A549 (cell line): ENCODE measurements at regions of chr15 and their contacts with region 1.

Region 1: GRCh38 chr15:73697033-73697467 is 12.9 kb downstream of the CD276 start:
- DNase-seq: no peak
- ATAC-seq: no peak
- H3K4me3 ChIP-seq: no peak overlapping the region
- H3K27ac ChIP-seq: no peak overlapping the region
- H3K4me1 ChIP-seq: no peaks in the 10 kb centered on the region
- CTCF ChIP-seq: no peak
- EP300 ChIP-seq: no peak
- POLR2A ChIP-seq: no peak
- RAD21 ChIP-seq: no peak

Region 2: GRCh38 chr15:73560501-73561117 is 136.4 kb before region 1 on chr15:
- CTCF ChIA-PET with region 1: interaction called, 38 read pairs
- POLR2A ChIA-PET with region 1: interaction called, 3 read pairs
- DNase-seq: peak; percentile 30 to 80
- ATAC-seq: peak; percentile 74 to 88; a peak in 5 of 6 replicates
- H3K4me3 ChIP-seq: no peak overlapping the region
- H3K27ac ChIP-seq: no peak overlapping the region
- H3K4me1 ChIP-seq: 0 out of 3 replicates have a peak, but pooled peaks cover 6% of the 10 kb centered on the region
- CTCF ChIP-seq: peak; percentile 87
- EP300 ChIP-seq: no peak
- POLR2A ChIP-seq: no peak
- RAD21 ChIP-seq: peak; percentile 83 to 88

Region 3: DNA sequence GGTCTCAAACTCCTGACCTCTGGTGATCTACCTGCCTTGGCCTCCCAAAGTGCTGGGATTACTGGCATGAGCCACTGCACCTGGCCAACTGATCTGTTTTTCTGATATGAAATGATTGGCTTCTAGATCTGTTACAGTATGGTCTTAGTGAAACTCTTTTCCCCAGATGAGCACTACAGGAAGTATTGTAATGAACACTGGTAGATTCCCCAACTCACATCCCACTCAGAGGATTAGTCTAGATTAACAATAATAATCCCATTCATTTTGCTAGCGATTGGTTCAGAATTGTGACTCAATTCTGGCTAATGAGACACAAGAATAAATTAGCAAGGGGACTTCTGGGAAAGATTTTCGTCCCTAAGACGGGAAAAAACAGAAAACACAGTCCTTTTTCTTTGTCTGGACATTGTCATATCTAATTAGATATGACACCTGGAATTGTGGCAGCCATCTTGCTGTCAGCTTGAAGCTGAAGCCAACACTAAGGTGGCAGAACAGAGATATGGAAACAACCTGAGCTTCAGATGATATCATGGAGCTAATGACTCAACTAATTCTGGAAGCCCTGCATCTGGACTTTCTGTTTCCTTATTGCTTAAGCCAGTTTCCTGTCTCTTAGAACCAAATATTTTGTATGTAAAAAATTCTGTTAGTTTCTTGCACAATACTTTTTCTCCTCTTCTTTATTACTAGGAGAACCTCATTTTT is 46.5 kb before region 1 on chr15:
- CTCF ChIA-PET with region 1: interaction called, 12 read pairs
- POLR2A ChIA-PET with region 1: interaction called, 8 read pairs
- DNase-seq: no peak
- ATAC-seq: 0 out of 6 replicates have a peak, but pooled peaks of 1 of the 2 experiments have one; percentile 24
- H3K4me3 ChIP-seq: no peak overlapping the region
- H3K27ac ChIP-seq: no peak overlapping the region
- H3K4me1 ChIP-seq: peaks cover 2% of the 10 kb centered on the region; the same call in 1 of the 3 replicates
- CTCF ChIP-seq: no peak
- EP300 ChIP-seq: no peak
- POLR2A ChIP-seq: no peak
- RAD21 ChIP-seq: no peak

Region 4: DNA sequence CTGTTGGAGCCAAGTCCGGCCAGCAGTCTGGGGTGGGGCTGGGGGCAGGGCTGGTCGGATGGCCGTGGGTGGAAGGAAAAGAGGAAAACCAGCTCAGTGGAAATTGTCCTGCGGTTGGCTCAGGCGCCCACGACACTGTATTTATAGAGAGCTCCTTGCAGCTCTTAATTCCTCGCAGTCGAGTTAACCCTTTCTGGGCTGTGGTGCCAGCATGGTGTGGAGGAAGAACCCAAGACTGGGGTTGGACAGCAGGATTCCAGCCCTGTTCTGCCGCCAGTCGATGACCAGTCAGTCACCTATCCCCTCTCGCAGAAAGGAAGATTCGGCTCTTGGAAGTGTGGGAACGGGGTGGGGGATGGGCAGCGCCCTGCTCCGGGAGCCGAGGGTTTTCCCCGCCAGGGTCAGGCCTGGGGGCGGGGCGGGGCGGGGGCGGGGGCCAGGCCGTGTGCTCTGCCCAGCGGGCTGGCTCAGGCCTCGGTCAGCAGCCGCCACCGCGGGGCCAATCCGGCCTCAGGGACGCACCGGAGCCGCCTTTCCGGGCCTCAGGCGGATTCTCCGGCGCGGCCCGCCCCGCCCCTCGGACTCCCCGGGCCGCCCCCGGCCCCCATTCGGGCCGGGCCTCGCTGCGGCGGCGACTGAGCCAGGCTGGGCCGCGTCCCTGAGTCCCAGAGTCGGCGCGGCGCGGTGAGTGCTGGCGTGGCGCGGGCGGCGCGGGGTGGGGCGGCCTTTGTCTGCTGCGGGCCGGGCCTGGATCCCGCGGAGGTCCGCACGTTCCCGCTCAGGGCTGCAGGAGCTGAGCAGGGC is 13.1 kb before region 1 on chr15 and contains the start of gene CD276:
- CTCF ChIA-PET with region 1: interaction called, 84 read pairs
- POLR2A ChIA-PET with region 1: no interaction called
- DNase-seq: peak; percentile 47 to 57
- ATAC-seq: peak; percentile 88 to 89
- H3K4me3 ChIP-seq: peak within 1 kb of the TSS; percentile 90
- H3K27ac ChIP-seq: peak within 1 kb of the TSS; percentile 88 to 97
- H3K4me1 ChIP-seq: peaks cover 29% of the 10 kb centered on the region
- CTCF ChIP-seq: no peak; the same call in 2 of the 3 replicates
- EP300 ChIP-seq: no peak
- POLR2A ChIP-seq: peak; percentile 34; the same call in 1 of the 2 replicates
- RAD21 ChIP-seq: no peak
- polyA plus RNA-seq, gene CD276: 24.8 and 32.8 TPM in 2 replicates

Region 5: DNA sequence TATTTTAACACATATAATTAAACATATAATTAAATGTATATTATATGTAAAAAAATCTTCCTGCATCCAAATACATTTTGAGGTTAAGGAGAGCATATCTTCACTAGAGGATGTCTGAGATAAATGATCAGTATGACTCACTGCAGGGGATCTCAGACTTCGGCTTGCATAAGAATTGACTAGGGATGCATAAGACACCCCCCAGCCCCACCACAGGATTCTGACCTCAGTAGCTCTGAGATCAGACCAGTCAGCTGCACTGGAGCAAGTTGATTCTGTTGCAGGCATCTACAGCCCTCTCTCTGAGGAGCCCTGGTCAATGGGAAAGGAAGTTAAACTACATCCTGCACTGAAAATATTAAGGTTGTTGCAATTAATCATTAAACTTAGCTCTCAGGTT is 147.3 kb after region 1 on chr15:
- CTCF ChIA-PET with region 1: no interaction called
- POLR2A ChIA-PET with region 1: no interaction called
- DNase-seq: no peak
- ATAC-seq: no peak
- H3K4me3 ChIP-seq: no peak overlapping the region
- H3K27ac ChIP-seq: no peak overlapping the region
- H3K4me1 ChIP-seq: no peaks in the 10 kb centered on the region
- CTCF ChIP-seq: no peak
- EP300 ChIP-seq: no peak
- POLR2A ChIP-seq: no peak
- RAD21 ChIP-seq: no peak